ENCODE measurements at regions of chr7 and their contacts with region 1.

Region 1: DNA sequence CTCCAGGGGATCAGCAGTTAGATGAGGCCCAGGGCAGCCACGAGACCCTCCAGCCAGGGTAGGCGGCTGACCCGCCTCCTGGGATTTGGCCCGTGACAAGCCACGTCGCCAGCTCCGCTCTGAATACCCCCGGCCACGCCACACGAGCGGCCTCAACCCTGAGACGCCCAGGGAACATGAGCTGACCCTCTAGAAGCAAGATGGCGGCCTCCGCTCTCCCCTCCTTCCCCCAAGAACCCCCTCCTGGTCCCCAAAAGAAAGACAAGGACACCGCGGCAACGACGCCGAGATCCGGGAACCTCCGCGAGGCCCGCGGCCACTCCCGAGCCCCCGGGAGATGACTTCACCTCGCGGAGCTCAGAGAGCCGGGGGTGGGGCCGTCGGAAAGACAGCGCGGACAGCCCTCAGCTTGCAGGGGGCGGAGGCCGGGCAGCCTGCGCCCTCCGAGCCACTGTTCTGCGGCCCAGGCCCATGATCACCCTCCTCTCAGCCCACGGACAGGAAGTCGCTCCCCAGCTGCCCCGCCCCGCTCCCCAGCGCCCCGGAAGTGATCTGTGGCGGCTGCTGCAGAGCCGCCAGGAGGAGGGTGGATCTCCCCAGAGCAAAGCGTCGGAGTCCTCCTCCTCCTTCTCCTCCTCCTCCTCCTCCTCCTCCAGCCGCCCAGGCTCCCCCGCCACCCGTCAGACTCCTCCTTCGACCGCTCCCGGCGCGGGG is at the start of gene RALA:
- DNase-seq: peak; percentile 95
- H3K4me3 ChIP-seq: peak within 1 kb of the TSS; percentile 90
- H3K4me3 Mint-ChIP-seq: peak within 1 kb of the TSS; percentile 84
- H3K27ac Mint-ChIP-seq: peak within 1 kb of the TSS; percentile 88
- H3K4me1 ChIP-seq: peaks cover 25% of the 10 kb centered on the region
- H3K4me1 Mint-ChIP-seq: peaks cover 53% of the 10 kb centered on the region
- H3K27me3 ChIP-seq: no peaks in the 10 kb centered on the region
- H3K27me3 Mint-ChIP-seq: no peaks in the 10 kb centered on the region
- CTCF ChIP-seq: no peak
- total RNA-seq, gene RALA: 41.7 and 43.5 TPM in 2 replicates

Region 2: DNA sequence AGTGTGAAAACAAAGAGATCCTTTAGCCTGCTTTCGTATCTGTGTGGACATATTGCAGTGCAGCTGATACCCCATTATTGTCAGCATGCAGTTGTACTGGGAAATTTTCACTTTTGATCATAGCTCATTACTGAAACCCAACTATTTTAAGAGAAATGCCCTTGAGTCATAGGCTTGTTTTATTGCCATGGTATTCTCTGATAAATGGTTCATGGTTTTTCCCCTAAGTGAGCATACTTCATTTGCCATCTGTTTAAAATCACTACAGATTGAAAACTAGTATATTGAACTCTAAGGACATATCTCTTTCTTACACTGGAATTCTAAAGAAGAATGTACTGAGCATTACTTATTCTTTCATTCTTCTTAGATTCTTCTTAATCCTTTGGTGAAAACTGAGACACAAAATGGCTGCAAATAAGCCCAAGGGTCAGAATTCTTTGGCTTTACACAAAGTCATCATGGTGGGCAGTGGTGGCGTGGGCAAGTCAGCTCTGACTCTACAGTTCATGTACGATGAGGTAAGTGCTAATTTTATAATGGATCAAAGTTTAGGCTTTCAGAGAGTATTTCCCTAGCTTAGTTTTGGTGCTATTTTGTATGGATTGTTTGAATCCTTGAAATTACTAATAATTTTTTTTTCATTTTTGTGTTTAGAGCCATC is 63.2 kb after region 1 on chr7:
- CTCF ChIA-PET with region 1: no interaction called
- POLR2A ChIA-PET with region 1: no interaction called
- intact Hi-C with region 1: loop called (anchors 5 kb)
- DNase-seq: no peak
- H3K4me3 ChIP-seq: no peak overlapping the region
- H3K4me3 Mint-ChIP-seq: no peak overlapping the region
- H3K27ac Mint-ChIP-seq: no peak overlapping the region
- H3K4me1 ChIP-seq: peaks cover 5% of the 10 kb centered on the region
- H3K4me1 Mint-ChIP-seq: peaks cover 13% of the 10 kb centered on the region
- H3K27me3 ChIP-seq: no peaks in the 10 kb centered on the region
- H3K27me3 Mint-ChIP-seq: no peaks in the 10 kb centered on the region
- CTCF ChIP-seq: no peak

Region 3: DNA sequence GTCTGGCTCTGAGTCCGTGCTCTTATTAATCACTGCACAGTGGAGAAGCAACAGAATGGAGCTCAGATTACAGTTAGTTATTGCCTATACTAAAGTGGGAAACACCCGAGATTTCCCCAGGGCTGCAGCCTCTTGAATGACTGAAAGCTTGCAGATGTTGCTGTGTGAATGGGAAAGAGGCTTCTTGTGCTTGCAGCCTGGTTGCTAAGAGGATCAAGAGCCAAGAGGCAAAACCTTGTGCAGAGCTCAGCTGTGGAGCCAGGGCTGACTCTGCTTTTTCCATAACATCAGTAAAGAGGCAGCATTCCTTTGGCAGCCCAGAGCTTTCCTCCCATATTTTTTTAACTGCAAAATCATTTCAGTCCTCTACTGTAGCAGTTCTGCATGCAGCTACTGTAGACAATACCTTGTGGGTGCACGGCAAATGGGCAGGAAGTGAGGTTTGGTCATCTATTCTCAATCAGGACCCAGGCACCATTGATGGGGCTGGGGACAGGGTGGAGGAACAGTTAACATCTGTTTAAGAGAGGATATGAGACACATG is 86.7 kb after region 1 on chr7:
- CTCF ChIA-PET with region 1: no interaction called
- POLR2A ChIA-PET with region 1: no interaction called
- intact Hi-C with region 1: no loop called
- DNase-seq: no peak
- H3K4me3 ChIP-seq: no peak overlapping the region
- H3K4me3 Mint-ChIP-seq: no peak overlapping the region
- H3K27ac Mint-ChIP-seq: no peak overlapping the region
- H3K4me1 ChIP-seq: no peaks in the 10 kb centered on the region
- H3K4me1 Mint-ChIP-seq: no peaks in the 10 kb centered on the region
- H3K27me3 ChIP-seq: no peaks in the 10 kb centered on the region
- H3K27me3 Mint-ChIP-seq: no peaks in the 10 kb centered on the region
- CTCF ChIP-seq: no peak

Region 4: DNA sequence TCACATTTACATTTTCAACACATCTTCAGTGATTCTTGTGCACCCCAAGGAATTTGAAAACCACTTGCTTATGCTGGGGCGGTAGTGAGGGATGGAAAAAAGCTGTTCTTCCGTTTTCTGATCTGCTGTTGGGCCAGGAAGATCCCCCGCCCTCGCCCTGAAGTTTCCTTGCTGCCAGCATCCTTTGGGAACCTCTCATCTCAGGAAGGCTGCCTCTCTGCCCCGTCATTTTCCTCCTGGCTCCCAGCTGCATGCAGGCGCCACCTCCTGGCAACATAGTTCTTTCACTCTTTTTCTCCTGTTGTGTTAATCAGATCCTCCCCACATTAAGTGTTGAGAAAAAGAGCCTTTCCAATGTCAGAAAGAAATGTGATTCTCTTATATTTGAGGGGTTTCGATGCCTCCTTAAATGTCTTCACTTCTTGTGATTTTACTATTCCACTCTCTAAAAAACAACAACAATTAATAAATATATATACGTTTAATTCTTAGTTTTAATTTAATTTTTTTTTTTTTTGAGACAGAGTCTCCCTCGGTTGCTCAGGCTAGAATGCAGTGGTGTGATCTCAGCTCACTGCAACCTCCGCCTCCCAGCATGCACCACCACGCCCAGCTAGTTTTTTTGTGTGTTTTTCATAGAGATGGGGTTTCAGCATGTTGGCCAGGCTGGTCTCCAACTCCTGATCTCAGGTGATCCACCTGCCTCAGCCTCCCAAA is 123.1 kb after region 1 on chr7:
- CTCF ChIA-PET with region 1: no interaction called
- POLR2A ChIA-PET with region 1: no interaction called
- intact Hi-C with region 1: loop called (anchors 1 kb)
- DNase-seq: peak; percentile 76 to 80
- H3K4me3 ChIP-seq: no peak overlapping the region
- H3K4me3 Mint-ChIP-seq: no peak overlapping the region
- H3K27ac Mint-ChIP-seq: no peak overlapping the region
- H3K4me1 ChIP-seq: peaks cover 14% of the 10 kb centered on the region
- H3K4me1 Mint-ChIP-seq: peaks cover 13% of the 10 kb centered on the region
- H3K27me3 ChIP-seq: no peaks in the 10 kb centered on the region
- H3K27me3 Mint-ChIP-seq: no peaks in the 10 kb centered on the region
- CTCF ChIP-seq: peak; percentile 79 to 83

Measured in Caco-2 (cell line).